Pancreas (tissue), 10 donors: ENCODE measurements at regions of chr20 and their contacts with region 1.

Region 1: GRCh38 chr20:48620519-48621254 is 207.1 kb downstream of the PREX1 start:
- DNase-seq: peak; percentile 83 to 95 (median 92)
- ATAC-seq: peak; percentile 93 to 97 (median 96)
- H3K4me3 ChIP-seq: peak overlapping the region in 2 of 4 donors; percentile 15 to 21
- H3K27ac ChIP-seq: no peak overlapping the region
- H3K4me1 ChIP-seq: peaks cover 0 to 7% (median 0%) of the 10 kb centered on the region in 3 donors
- H3K27me3 ChIP-seq: no peaks in the 10 kb centered on the region
- CTCF ChIP-seq: peak; percentile 73 to 87 (median 86)

Region 2: GRCh38 chr20:47663333-47664067 is 957.2 kb before region 1 on chr20:
- intact Hi-C with region 1: loop called in 2 of 3 experiments (anchors 2 to 5 kb)
- DNase-seq: peak; percentile 50 to 92 (median 78)
- ATAC-seq: peak; percentile 78 to 97 (median 90)
- H3K4me3 ChIP-seq: no peak overlapping the region
- H3K27ac ChIP-seq: no peak overlapping the region
- H3K4me1 ChIP-seq: no peaks in the 10 kb centered on the region
- H3K27me3 ChIP-seq: no peaks in the 10 kb centered on the region
- CTCF ChIP-seq: peak; percentile 96 to 99 (median 98)

Region 3: GRCh38 chr20:47677635-47678453 is 942.8 kb before region 1 on chr20:
- intact Hi-C with region 1: loop called (anchors 5 to 10 kb)
- DNase-seq: peak in 5 of 6 donors; percentile 24 to 81 (median 62)
- ATAC-seq: peak; percentile 75 to 91 (median 86)
- H3K4me3 ChIP-seq: no peak overlapping the region
- H3K27ac ChIP-seq: no peak overlapping the region
- H3K4me1 ChIP-seq: no peaks in the 10 kb centered on the region
- H3K27me3 ChIP-seq: no peaks in the 10 kb centered on the region
- CTCF ChIP-seq: peak; percentile 44 to 69 (median 64)

Region 4: DNA sequence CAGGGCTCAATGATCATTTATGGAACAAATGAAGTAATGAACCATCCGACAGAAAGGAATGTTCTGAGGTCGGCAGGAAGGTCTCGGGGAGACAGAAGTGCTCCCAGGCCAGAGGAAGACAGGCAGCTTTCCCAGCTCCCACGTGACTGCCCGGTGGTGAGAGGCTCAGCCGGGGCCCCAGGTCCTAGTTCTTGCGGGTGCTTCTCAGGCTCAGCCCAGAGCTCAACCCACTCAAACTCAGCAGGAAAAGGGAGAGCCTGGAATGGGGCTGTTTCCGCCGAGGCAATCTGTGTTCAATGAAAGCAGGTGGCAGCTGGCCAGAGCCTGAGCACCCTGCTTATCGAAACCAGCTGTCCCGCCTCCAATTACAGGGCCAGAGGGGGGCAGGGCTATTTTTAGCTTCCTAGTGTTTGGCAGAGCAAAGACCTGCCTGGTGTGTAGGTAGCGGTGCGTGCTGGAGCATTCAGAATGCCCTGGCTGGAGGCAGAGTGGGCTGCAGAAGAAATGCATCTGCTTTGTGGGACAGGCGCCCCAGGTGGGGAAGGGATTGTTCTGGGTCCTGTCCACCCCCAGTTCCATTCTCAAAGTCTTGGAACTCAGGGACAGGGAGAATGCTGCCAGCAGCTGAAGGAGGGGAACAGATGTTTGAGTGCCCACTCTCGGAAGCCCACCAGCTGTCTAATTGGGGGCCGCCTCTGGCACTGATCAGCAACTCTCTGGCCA is 62.0 kb after region 1 on chr20:
- intact Hi-C with region 1: no loop called
- DNase-seq: peak; percentile 86 to 97 (median 92)
- ATAC-seq: peak; percentile 83 to 95 (median 93)
- H3K4me3 ChIP-seq: no peak overlapping the region
- H3K27ac ChIP-seq: peak overlapping the region; percentile 23 to 72 (median 61)
- H3K4me1 ChIP-seq: peaks cover 9 to 42% (median 35%) of the 10 kb centered on the region in 3 donors
- H3K27me3 ChIP-seq: no peaks in the 10 kb centered on the region
- CTCF ChIP-seq: no peak